ENCODE measurements at regions of chr2 and their contacts with region 1.

Region 1: DNA sequence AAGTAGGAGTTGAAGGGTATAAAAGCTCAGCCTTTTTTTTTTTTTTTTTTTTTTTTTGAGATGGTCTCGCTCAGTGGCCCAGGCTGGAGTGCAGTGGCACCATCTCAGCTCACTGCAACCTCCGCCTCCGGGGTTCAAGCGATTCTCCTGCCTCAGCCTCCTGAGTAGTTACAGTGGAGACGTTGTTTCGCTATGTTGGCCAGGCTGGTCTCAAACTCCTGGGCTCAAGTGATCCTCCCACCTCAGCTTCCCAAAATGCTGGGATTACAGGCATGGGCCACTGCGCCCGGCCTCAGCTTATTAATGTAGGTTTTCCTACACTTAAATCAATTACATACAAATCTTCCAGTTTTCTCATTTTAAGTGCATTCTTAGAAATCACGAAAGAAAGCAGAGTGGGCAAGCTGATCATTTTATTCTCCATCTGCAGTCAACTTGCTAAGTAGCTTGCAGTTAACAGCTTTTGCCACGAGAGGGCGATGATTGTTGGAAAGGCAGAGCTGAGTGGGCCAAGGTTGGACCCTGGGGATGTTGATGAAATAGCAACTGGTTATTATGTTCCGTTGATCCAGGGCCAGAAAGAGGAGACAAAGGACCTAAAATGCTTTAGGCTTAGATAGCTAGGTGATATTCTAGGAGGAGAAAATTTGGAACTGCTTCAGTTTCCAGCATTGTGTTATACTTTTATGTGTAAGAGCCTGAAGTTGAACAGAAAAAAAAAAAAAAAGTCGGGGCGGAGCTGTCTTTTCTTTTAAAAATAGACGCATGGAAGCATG is 234.4 kb upstream of the EPAS1 start:
- DNase-seq: peak; percentile 84
- ATAC-seq: peak; percentile 77
- H3K4me3 Mint-ChIP-seq: no peak overlapping the region
- H3K27ac Mint-ChIP-seq: no peak overlapping the region
- H3K4me1 Mint-ChIP-seq: peaks cover 10% of the 10 kb centered on the region
- H3K27me3 Mint-ChIP-seq: no peaks in the 10 kb centered on the region

Region 2: DNA sequence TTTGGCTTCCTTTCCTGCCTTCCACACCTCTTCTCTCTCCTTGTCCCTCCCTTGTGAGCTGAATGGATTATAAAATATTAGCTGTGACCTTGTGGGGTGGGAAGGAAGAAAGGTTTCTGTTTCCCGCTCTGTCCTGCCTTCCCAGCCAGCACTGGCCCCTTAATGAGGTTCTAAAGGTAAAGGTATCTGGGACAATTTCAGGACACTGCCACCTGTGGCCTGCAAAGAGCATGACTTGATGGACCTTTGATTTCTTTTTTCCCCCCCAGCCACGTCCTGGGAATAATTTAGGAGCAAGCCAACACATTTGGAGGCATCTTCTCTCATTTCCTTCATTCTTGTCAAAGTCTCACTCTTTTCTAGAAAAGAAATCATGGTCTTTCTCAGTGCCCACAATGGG is 12.3 kb before region 1 on chr2:
- CTCF ChIA-PET with region 1: interaction called, 30 read pairs
- POLR2A ChIA-PET with region 1: no interaction called
- DNase-seq: no peak
- ATAC-seq: no peak
- H3K4me3 Mint-ChIP-seq: no peak overlapping the region
- H3K27ac Mint-ChIP-seq: no peak overlapping the region
- H3K4me1 Mint-ChIP-seq: peaks cover 11% of the 10 kb centered on the region
- H3K27me3 Mint-ChIP-seq: no peaks in the 10 kb centered on the region

Region 3: DNA sequence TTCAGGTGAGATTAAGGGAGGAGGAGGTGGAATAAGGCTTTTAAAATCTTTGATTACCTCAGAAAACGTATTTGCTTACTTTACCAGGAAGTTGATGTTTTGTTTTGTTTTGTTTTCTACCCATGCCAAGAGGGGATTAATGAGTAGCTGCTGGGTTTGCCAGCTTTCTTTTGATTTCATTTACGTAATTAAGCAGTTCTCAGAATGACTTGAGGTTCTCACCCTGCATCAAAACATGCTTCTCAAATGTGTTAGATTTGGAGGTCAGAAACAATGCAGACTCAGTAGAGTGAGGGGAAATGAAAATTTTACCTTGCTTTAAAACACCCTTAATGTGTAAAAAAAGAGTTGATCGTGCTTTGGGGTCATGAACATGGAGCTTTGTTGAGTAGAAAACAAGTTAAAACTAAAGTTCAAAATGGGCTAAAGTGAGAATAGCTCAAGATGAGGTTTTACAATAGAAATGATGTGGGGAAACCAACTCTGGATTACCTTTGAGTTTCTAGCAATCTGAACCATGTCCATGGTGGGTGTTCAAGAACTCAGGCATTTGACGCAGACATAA is 17.3 kb after region 1 on chr2:
- CTCF ChIA-PET with region 1: interaction called, 18 read pairs
- POLR2A ChIA-PET with region 1: no interaction called
- DNase-seq: no peak
- ATAC-seq: no peak
- H3K4me3 Mint-ChIP-seq: no peak overlapping the region
- H3K27ac Mint-ChIP-seq: no peak overlapping the region
- H3K4me1 Mint-ChIP-seq: peaks cover 15% of the 10 kb centered on the region
- H3K27me3 Mint-ChIP-seq: no peaks in the 10 kb centered on the region

Region 4: GRCh38 chr2:46294176-46294836 is 231.5 kb after region 1 on chr2:
- CTCF ChIA-PET with region 1: interaction called, 19 read pairs
- POLR2A ChIA-PET with region 1: no interaction called
- DNase-seq: peak; percentile 59
- ATAC-seq: no peak
- H3K4me3 Mint-ChIP-seq: no peak overlapping the region
- H3K27ac Mint-ChIP-seq: no peak overlapping the region
- H3K4me1 Mint-ChIP-seq: peaks cover 28% of the 10 kb centered on the region
- H3K27me3 Mint-ChIP-seq: peaks cover 62% of the 10 kb centered on the region

Region 5: DNA sequence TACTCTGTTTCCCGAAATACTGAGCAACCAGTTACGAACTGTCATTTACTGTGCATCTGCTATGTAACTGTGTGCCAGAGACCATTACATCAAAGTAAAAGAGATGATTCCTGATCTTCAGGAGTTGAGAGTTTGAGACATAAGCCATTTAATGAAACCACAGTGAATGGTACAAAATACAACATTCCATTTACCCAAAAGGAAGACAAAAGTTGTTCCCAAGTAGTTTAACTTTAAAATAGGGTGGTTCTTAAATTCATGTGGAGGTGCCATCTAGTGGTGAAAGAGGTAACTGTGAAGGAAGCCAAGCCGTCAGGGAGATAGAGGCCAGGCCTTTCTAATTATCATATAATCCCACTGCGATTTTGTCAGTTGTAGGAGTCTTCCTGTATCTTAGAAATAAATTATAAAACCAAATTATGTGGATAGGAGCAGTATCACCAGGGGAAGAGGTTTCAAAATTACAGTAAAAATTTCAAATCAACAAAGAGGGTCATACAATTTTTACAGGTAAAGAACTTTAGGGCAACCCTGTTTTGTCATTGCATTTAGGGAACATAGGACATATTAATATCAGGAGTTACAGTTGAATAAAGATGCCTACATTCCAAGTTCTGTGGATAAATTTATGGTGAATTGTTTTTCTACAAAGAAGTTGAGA is 302.1 kb after region 1 on chr2:
- CTCF ChIA-PET with region 1: interaction called, 48 read pairs
- POLR2A ChIA-PET with region 1: no interaction called
- DNase-seq: peak; percentile 59
- ATAC-seq: no peak
- H3K4me3 Mint-ChIP-seq: no peak overlapping the region
- H3K27ac Mint-ChIP-seq: no peak overlapping the region
- H3K4me1 Mint-ChIP-seq: peaks cover 71% of the 10 kb centered on the region
- H3K27me3 Mint-ChIP-seq: peaks cover under 1% of the 10 kb centered on the region

Measured in activated CD8-positive, alpha-beta T cell treated with anti-CD3 and anti-CD28 coated beads, Interleukin-2, amount 10 ng/mL, durations not matched to agents 7 days and 5 days (primary cell).